CD8-positive, alpha-beta T cell (primary cell): ENCODE measurements at regions of chr1 and their contacts with region 1.

Region 1: GRCh38 chr1:28248283-28249012 is 10.9 kb upstream of the SESN2 start:
- DNase-seq: peak; percentile 72 to 89 (median 84)
- ATAC-seq: peak; percentile 18
- H3K4me3 ChIP-seq: peak overlapping the region in 1 of 2 experiments; percentile 28
- H3K4me3 Mint-ChIP-seq: peak overlapping the region; percentile 61
- H3K27ac ChIP-seq: peak overlapping the region; percentile 65 to 94
- H3K27ac Mint-ChIP-seq: peak overlapping the region; percentile 96
- H3K4me1 ChIP-seq: peaks cover 40% of the 10 kb centered on the region
- H3K4me1 Mint-ChIP-seq: peaks cover 44% of the 10 kb centered on the region
- H3K27me3 ChIP-seq: no peaks in the 10 kb centered on the region
- H3K27me3 Mint-ChIP-seq: no peaks in the 10 kb centered on the region
- CTCF ChIP-seq: peak; percentile 90

Region 2: GRCh38 chr1:28266920-28267322 is 18.5 kb after region 1 on chr1:
- CTCF ChIA-PET with region 1: interaction called, 16 read pairs
- POLR2A ChIA-PET with region 1: interaction called, 4 read pairs
- intact Hi-C with region 1: no loop called
- DNase-seq: no peak
- ATAC-seq: no peak
- H3K4me3 ChIP-seq: no peak overlapping the region
- H3K4me3 Mint-ChIP-seq: no peak overlapping the region
- H3K27ac ChIP-seq: no peak overlapping the region
- H3K27ac Mint-ChIP-seq: no peak overlapping the region
- H3K4me1 ChIP-seq: no peaks in the 10 kb centered on the region
- H3K4me1 Mint-ChIP-seq: peaks cover 8% of the 10 kb centered on the region
- H3K27me3 ChIP-seq: no peaks in the 10 kb centered on the region
- H3K27me3 Mint-ChIP-seq: no peaks in the 10 kb centered on the region
- CTCF ChIP-seq: no peak

Region 3: GRCh38 chr1:28341591-28341990 is 93.1 kb after region 1 on chr1:
- CTCF ChIA-PET with region 1: interaction called, 15 read pairs
- POLR2A ChIA-PET with region 1: no interaction called
- intact Hi-C with region 1: no loop called
- DNase-seq: no peak
- ATAC-seq: no peak
- H3K4me3 ChIP-seq: no peak overlapping the region
- H3K4me3 Mint-ChIP-seq: no peak overlapping the region
- H3K27ac ChIP-seq: no peak overlapping the region
- H3K27ac Mint-ChIP-seq: no peak overlapping the region
- H3K4me1 ChIP-seq: no peaks in the 10 kb centered on the region
- H3K4me1 Mint-ChIP-seq: peaks cover 5% of the 10 kb centered on the region
- H3K27me3 ChIP-seq: no peaks in the 10 kb centered on the region
- H3K27me3 Mint-ChIP-seq: no peaks in the 10 kb centered on the region
- CTCF ChIP-seq: no peak

Region 4: DNA sequence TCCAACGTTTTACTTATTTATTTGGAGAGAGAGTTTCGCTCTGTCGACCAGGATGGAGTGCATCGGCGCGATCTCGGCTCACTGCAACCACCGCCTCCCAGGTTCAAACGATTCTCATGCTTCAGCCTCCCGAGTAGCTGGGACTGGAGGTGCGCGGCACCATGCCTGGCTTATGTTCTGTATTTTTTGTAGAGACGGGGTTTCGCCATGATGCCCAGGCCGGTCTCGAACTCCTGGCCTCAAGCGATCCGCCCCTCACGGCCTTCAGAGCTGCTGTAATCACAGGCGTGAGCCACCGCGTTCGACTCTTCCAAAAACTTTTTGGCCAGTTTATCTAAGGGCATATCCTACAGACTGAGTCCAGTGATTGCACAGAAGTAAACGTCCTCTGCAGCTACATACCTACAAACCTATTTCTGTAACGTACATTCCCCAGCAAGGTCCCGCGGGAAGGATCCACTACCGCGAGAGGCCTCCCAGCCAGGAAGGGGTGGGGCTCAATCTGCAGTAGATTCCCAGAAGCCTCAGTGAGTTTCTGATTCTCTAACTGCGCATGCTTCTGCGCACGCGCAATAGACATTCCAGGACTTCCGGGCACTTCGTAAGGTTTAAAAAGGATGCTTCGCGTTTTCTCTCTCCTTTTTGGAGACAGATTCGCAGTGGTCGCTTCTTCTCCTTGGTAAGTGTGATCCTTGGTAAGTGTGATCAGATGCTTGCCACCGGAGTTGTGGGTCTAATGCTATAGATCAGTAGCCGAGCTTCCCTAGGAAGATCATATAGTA is 257.1 kb after region 1 on chr1 and contains the start of gene RCC1:
- CTCF ChIA-PET with region 1: interaction called, 4 read pairs
- POLR2A ChIA-PET with region 1: interaction called, 8 read pairs
- intact Hi-C with region 1: loop called (anchors 1 kb)
- DNase-seq: peak; percentile 89 to 99 (median 94)
- ATAC-seq: peak; percentile 91
- H3K4me3 ChIP-seq: peak within 1 kb of the TSS; percentile 82 to 88
- H3K4me3 Mint-ChIP-seq: peak within 1 kb of the TSS; percentile 95
- H3K27ac ChIP-seq: peak within 1 kb of the TSS; percentile 77 to 85
- H3K27ac Mint-ChIP-seq: peak within 1 kb of the TSS; percentile 94
- H3K4me1 ChIP-seq: peaks cover 31% of the 10 kb centered on the region
- H3K4me1 Mint-ChIP-seq: peaks cover 45% of the 10 kb centered on the region
- H3K27me3 ChIP-seq: no peaks in the 10 kb centered on the region
- H3K27me3 Mint-ChIP-seq: no peaks in the 10 kb centered on the region
- CTCF ChIP-seq: no peak
- total RNA-seq, gene RCC1: 12.5 to 14.4 TPM

Region 5: GRCh38 chr1:28613175-28613574 is 364.7 kb after region 1 on chr1:
- CTCF ChIA-PET with region 1: no interaction called
- POLR2A ChIA-PET with region 1: no interaction called
- intact Hi-C with region 1: no loop called
- DNase-seq: no peak
- ATAC-seq: no peak
- H3K4me3 ChIP-seq: no peak overlapping the region
- H3K4me3 Mint-ChIP-seq: no peak overlapping the region
- H3K27ac ChIP-seq: no peak overlapping the region
- H3K27ac Mint-ChIP-seq: no peak overlapping the region
- H3K4me1 ChIP-seq: no peaks in the 10 kb centered on the region
- H3K4me1 Mint-ChIP-seq: no peaks in the 10 kb centered on the region
- H3K27me3 ChIP-seq: no peaks in the 10 kb centered on the region
- H3K27me3 Mint-ChIP-seq: no peaks in the 10 kb centered on the region
- CTCF ChIP-seq: no peak

Region 6: DNA sequence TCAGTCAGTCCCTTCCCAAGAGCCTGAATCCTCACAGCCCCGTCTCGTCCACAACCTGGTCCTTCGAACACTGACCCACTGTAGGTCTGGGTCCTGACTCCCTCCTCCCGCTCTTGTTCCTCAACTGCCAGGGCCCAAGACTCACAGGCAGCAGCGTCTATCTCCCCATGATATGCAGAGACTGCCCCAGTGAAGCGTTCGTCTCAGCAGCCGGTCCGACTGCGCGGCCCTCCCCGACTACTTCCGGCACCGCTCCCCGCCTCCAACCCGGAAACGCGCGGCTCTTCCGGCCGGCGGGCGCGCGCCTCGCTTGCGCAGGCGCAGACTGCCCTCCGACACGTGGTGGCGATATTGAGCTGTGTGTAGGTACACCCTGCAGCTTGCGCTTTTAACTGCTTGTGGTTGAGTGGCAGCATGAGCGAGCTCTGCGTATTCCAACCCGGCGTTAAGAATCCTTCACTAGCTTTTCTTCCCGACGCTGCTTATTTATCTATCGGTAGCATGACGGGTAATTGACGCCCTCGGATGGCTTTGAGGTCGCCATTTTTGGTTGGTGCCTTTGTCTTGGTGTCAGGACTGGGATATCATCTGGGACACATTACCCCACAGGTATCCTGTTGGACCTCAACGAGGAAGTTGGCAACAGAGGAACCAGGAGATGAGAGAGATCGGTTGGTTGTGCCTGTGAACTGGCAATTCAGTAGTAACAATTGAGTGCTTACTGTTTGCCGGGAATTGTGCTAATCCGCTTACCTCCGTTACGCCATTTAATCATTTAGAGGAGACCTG is 394.6 kb after region 1 on chr1 and contains the start of gene TAF12:
- CTCF ChIA-PET with region 1: no interaction called
- POLR2A ChIA-PET with region 1: interaction called, 4 read pairs
- intact Hi-C with region 1: loop called (anchors 2 to 5 kb)
- DNase-seq: peak; percentile 87 to 98 (median 91)
- ATAC-seq: peak; percentile 79
- H3K4me3 ChIP-seq: peak within 1 kb of the TSS; percentile 62 to 92
- H3K4me3 Mint-ChIP-seq: peak within 1 kb of the TSS; percentile 100
- H3K27ac ChIP-seq: peak within 1 kb of the TSS; percentile 88 to 90
- H3K27ac Mint-ChIP-seq: peak within 1 kb of the TSS; percentile 99
- H3K4me1 ChIP-seq: peaks cover 34% of the 10 kb centered on the region
- H3K4me1 Mint-ChIP-seq: peaks cover 54% of the 10 kb centered on the region
- H3K27me3 ChIP-seq: no peaks in the 10 kb centered on the region
- H3K27me3 Mint-ChIP-seq: no peaks in the 10 kb centered on the region
- CTCF ChIP-seq: peak; percentile 32
- total RNA-seq, gene TAF12: 7.7 to 8.5 TPM